SK-N-SH (cell line): ENCODE measurements at regions of chr2 and their contacts with region 1.

Region 1: GRCh38 chr2:120735746-120736170 is at the start of gene GLI2:
- DNase-seq: peak; percentile 92
- H3K4me3 ChIP-seq: peak within 1 kb of the TSS; percentile 80 to 88
- H3K27ac ChIP-seq: peak within 1 kb of the TSS; percentile 74 to 81
- H3K4me1 ChIP-seq: peaks cover 11 to 22% of the 10 kb centered on the region in 2 experiments; a peak in 3 of 4 replicates
- H3K27me3 ChIP-seq: no peaks in the 10 kb centered on the region
- CTCF ChIP-seq: peak; percentile 78
- EP300 ChIP-seq: no peak
- RAD21 ChIP-seq: peak; percentile 66
- polyA plus RNA-seq, gene GLI2: 2.0 and 3.4 TPM in 2 replicates

Region 2: GRCh38 chr2:120566331-120567035 is 169.3 kb before region 1 on chr2:
- CTCF ChIA-PET with region 1: no interaction called
- POLR2A ChIA-PET with region 1: no interaction called
- DNase-seq: no peak
- H3K4me3 ChIP-seq: no peak overlapping the region
- H3K27ac ChIP-seq: no peak overlapping the region
- H3K4me1 ChIP-seq: no peaks in the 10 kb centered on the region
- H3K27me3 ChIP-seq: no peaks in the 10 kb centered on the region
- CTCF ChIP-seq: no peak
- EP300 ChIP-seq: no peak
- RAD21 ChIP-seq: no peak

Region 3: GRCh38 chr2:120712180-120712681 is 23.5 kb before region 1 on chr2:
- CTCF ChIA-PET with region 1: interaction called, 12 read pairs
- POLR2A ChIA-PET with region 1: no interaction called
- DNase-seq: peak; percentile 46
- H3K4me3 ChIP-seq: no peak overlapping the region
- H3K27ac ChIP-seq: no peak overlapping the region
- H3K4me1 ChIP-seq: peaks cover 0 to 28% of the 10 kb centered on the region in 2 experiments; a peak in 1 of 4 replicates
- H3K27me3 ChIP-seq: no peaks in the 10 kb centered on the region
- CTCF ChIP-seq: no peak
- EP300 ChIP-seq: peak in 1 of 2 experiments; percentile 59; a peak in 2 of 4 replicates
- RAD21 ChIP-seq: no peak

Region 4: GRCh38 chr2:120722568-120723421 is 13.0 kb before region 1 on chr2:
- CTCF ChIA-PET with region 1: interaction called, 25 read pairs
- POLR2A ChIA-PET with region 1: no interaction called
- DNase-seq: no peak
- H3K4me3 ChIP-seq: peak overlapping the region in 1 of 2 experiments; percentile 3; a peak in 1 of 4 replicates
- H3K27ac ChIP-seq: peak overlapping the region in 1 of 2 experiments; percentile 79; a peak in 2 of 4 replicates
- H3K4me1 ChIP-seq: peaks cover 12 to 24% of the 10 kb centered on the region in 2 experiments; a peak in 2 of 4 replicates
- H3K27me3 ChIP-seq: no peaks in the 10 kb centered on the region
- CTCF ChIP-seq: no peak
- EP300 ChIP-seq: no peak
- RAD21 ChIP-seq: no peak

Region 5: DNA sequence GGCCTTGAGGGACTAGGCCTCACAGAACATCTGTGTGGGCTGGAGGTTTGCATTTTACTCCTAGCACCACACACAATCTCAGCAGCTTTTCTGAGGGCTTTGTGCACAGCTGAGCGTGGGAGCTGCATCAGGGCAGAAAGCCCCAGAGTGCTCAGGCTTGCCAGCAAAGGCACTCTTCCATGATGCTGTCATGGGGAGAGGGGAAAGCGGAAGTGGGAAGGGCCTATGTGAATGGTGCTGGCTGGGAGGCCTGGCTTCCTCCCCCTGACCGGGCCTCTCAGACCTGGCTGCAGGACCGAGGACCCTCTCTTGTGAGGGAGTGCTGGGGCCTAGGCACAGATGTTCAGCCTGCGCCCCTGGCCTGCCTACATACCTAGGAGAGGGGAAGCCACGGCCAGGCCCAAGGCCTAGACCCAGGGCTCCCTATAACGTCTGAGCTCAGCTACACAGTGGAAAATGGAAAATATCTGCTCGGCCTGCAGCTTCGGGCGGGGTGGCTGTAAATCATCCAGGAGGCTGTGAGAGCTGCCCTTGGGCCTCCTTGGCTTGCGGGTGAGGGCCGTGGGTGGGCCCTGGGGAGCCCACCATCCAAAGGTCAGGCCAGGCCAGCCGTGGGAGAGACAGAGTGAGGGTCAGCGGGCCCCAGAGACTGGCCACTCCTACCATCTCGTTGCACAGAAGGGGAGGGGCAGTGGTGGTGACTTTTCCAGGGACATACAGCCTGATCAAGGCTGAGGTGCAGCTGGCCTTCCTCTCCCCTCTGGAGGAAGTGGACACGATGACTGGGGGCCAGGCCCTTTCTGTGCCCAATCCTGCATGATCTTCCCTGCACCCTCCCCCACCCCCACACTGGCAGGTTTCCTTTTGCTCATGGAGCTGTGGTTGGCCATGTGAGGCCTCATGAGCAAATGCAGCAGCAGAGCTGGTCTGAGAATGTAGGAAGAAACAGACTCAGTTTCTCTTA is 22.7 kb after region 1 on chr2:
- CTCF ChIA-PET with region 1: interaction called, 10 read pairs
- POLR2A ChIA-PET with region 1: interaction called, 3 read pairs
- DNase-seq: no peak
- H3K4me3 ChIP-seq: no peak overlapping the region
- H3K27ac ChIP-seq: no peak overlapping the region
- H3K4me1 ChIP-seq: peaks cover 11 to 34% of the 10 kb centered on the region in 2 experiments
- H3K27me3 ChIP-seq: no peaks in the 10 kb centered on the region
- CTCF ChIP-seq: no peak
- EP300 ChIP-seq: no peak
- RAD21 ChIP-seq: no peak

Region 6: DNA sequence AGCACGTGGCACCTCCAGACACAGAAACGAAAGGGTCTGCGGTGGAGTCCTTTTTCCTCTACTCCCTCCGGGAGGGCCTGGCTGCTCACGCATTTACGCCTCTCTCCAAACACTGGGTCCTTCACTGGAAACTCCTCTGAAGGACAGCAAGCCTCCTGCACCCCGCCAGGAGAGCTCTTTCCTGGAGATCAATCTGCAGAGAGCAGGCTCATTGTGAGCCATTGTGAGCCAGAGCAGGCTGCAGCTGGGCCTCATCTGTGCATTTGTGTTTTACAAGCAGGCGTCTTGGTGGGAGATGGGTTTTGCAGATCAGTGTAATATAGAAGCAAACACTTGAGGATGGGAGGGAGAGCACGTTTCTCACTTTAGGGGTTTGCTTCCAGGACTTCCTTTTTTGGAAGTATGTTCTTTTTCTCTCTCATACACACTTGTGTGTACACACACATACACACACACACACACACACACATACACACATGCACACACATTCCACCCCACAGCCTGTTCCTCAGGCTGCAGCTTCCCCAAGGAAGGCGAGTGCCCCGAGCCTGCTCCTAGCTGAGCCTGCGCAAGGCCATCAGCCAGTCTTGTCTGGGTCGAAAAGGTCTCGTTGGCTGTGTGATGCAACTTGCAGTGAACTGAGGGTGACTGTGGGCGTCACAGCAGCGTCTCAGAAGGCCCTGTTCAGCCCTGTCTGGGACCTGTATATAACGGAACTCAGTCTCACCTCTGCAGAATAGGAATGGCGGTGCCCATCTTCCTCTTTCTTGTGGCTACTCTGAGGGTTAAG is 163.4 kb after region 1 on chr2:
- CTCF ChIA-PET with region 1: interaction called, 13 read pairs
- POLR2A ChIA-PET with region 1: no interaction called
- DNase-seq: no peak
- H3K4me3 ChIP-seq: no peak overlapping the region
- H3K27ac ChIP-seq: peak overlapping the region in 1 of 2 experiments; percentile 97; a peak in 1 of 4 replicates
- H3K4me1 ChIP-seq: peaks cover 0 to 58% of the 10 kb centered on the region in 2 experiments; a peak in 2 of 4 replicates
- H3K27me3 ChIP-seq: no peaks in the 10 kb centered on the region
- CTCF ChIP-seq: no peak
- EP300 ChIP-seq: no peak
- RAD21 ChIP-seq: no peak